Heart right ventricle (tissue), 16 donors: ENCODE measurements at regions of chr19 and their contacts with region 1.

Region 1: GRCh38 chr19:48468775-48469288 is 337 bp upstream of the CYTH2 start:
- DNase-seq: peak; percentile 99
- ATAC-seq: peak; percentile 93 to 97 (median 95)
- H3K4me3 ChIP-seq: peak overlapping the region; percentile 82 to 98 (median 90)
- H3K27ac ChIP-seq: peak overlapping the region; percentile 97 to 100 (median 99)
- H3K4me1 ChIP-seq: peaks cover 7 to 36% (median 15%) of the 10 kb centered on the region in 9 donors
- H3K27me3 ChIP-seq: no peaks in the 10 kb centered on the region
- CTCF ChIP-seq: peak in 1 of 9 donors; percentile 31

Region 2: DNA sequence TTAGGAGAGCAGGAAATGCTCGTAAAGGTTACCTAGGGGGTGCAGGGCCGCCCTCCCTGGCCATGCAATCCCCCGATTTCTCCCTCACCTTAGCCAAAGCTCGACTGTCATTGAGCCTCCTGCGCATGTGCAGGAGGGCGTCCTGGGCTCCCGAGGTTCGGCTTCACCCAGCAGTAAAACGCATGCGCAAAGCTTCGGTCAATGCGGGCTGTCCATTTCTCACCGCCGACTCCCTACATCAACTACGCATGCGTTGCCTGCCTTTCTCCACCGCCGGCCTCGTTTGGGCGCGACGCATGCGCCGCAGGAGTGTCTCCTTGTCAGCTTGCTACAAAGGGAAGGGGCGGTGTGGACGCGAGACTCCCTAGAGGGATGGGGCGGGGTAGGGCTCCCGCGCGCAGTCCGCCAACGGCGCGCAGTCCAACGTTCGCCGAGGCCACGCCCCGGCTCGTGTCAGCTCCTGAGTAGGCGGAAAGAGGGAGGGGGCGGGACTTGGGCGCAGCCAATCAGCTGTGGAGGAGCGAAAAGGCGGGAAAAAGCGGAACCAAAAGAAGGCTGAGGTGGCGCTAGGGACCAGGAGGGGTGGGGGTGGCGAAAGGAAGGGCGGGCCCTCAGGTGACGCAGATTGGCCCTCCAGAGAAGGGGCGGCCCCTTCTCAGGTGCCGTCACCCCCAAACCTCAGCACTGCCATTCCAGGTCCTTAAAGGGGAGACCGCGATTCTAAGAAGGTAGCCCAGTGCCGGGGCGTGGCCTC is 104.8 kb before region 1 on chr19 and contains the starts of genes SYNGR4 and TMEM143:
- intact Hi-C with region 1: loop called in 1 of 10 experiments (anchors 2 kb)
- DNase-seq: peak; percentile 99
- ATAC-seq: peak; percentile 95 to 98 (median 96)
- H3K4me3 ChIP-seq: peak within 1 kb of the TSS; percentile 47 to 86 (median 68)
- H3K27ac ChIP-seq: peak within 1 kb of the TSS; percentile 87 to 99 (median 96)
- H3K4me1 ChIP-seq: peaks cover 0 to 16% (median 5%) of the 10 kb centered on the region in 9 donors
- H3K27me3 ChIP-seq: no peaks in the 10 kb centered on the region
- CTCF ChIP-seq: no peak
- total RNA-seq, gene SYNGR4: not detected
- total RNA-seq, gene TMEM143: 51.8 to 110 (median 89.5) TPM

Region 3: GRCh38 chr19:48391107-48391986 is 77.5 kb before region 1 on chr19 and contains the start of gene KDELR1:
- intact Hi-C with region 1: loop called in 1 of 10 experiments (anchors 2 kb)
- DNase-seq: peak; percentile 78 to 81
- ATAC-seq: peak; percentile 92 to 97 (median 94)
- H3K4me3 ChIP-seq: peak within 1 kb of the TSS; percentile 71 to 100 (median 95)
- H3K27ac ChIP-seq: peak within 1 kb of the TSS; percentile 62 to 97 (median 90)
- H3K4me1 ChIP-seq: peaks cover 0 to 21% (median 14%) of the 10 kb centered on the region in 9 donors
- H3K27me3 ChIP-seq: peaks cover 11 to 41% (median 40%) of the 10 kb centered on the region in 7 donors
- CTCF ChIP-seq: peak; percentile 82 to 96 (median 92)
- total RNA-seq, gene KDELR1: 63.2 to 95.2 (median 73.2) TPM

Region 4: DNA sequence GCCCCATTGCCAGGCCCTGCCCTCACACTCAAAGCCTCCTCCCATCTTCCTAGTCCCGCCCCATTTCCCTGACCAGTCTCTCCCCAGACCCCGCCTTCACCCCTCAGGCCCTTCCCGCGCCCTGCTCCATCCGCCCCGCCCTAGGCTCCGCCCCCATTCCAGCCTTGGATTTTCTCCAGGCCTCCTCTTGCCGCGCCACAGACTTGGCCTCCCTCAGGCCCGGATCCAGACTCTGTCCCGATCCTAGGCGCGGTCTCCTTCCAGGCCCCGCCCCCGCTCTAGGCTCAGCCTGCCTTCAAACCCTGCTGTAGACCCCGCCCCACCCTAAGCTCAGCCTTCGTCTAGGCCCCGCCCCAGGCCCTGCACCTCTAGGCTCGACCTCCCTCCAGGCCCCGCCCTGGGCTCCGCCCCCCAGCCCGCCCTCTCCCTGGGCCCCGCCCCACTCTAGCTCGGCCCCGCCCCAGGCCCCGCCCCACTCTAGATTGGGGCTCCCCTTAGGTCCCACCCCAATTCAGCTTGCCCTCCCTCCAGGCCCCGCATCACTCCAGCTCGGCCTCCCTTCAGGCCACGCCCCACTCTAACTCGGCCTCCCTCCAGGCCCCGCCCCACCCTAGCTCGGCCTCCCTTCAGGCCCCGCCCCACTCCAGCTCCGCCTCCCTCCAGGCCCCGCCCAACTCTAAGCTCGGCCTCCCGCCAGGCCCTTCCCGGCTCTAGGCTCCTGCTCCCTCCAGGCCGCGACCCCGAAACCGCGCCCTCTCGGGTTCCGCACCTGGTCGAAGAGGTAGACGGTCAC is 24.3 kb after region 1 on chr19:
- intact Hi-C with region 1: loop called in 1 of 10 experiments (anchors 1 kb)
- DNase-seq: peak; percentile 95
- ATAC-seq: peak; percentile 86 to 94 (median 89)
- H3K4me3 ChIP-seq: peak overlapping the region in 9 of 10 donors; percentile 25 to 62 (median 57)
- H3K27ac ChIP-seq: peak overlapping the region in 9 of 10 donors; percentile 25 to 83 (median 67)
- H3K4me1 ChIP-seq: peaks cover 2 to 52% (median 30%) of the 10 kb centered on the region in 9 donors
- H3K27me3 ChIP-seq: peaks cover 0 to 62% (median 18%) of the 10 kb centered on the region in 7 donors
- CTCF ChIP-seq: no peak

Region 5: GRCh38 chr19:48513289-48514122 is 44.7 kb after region 1 on chr19:
- intact Hi-C with region 1: no loop called
- DNase-seq: peak; percentile 47 to 66
- ATAC-seq: peak; percentile 69 to 88 (median 78)
- H3K4me3 ChIP-seq: peak overlapping the region; percentile 42 to 66 (median 60)
- H3K27ac ChIP-seq: peak overlapping the region in 3 of 10 donors; percentile 27 to 56 (median 28)
- H3K4me1 ChIP-seq: peaks cover 0 to 27% (median 12%) of the 10 kb centered on the region in 9 donors
- H3K27me3 ChIP-seq: peaks cover 4 to 48% (median 35%) of the 10 kb centered on the region in 7 donors
- CTCF ChIP-seq: no peak